ENCODE measurements at regions of chr14 and their contacts with region 1.

Region 1: DNA sequence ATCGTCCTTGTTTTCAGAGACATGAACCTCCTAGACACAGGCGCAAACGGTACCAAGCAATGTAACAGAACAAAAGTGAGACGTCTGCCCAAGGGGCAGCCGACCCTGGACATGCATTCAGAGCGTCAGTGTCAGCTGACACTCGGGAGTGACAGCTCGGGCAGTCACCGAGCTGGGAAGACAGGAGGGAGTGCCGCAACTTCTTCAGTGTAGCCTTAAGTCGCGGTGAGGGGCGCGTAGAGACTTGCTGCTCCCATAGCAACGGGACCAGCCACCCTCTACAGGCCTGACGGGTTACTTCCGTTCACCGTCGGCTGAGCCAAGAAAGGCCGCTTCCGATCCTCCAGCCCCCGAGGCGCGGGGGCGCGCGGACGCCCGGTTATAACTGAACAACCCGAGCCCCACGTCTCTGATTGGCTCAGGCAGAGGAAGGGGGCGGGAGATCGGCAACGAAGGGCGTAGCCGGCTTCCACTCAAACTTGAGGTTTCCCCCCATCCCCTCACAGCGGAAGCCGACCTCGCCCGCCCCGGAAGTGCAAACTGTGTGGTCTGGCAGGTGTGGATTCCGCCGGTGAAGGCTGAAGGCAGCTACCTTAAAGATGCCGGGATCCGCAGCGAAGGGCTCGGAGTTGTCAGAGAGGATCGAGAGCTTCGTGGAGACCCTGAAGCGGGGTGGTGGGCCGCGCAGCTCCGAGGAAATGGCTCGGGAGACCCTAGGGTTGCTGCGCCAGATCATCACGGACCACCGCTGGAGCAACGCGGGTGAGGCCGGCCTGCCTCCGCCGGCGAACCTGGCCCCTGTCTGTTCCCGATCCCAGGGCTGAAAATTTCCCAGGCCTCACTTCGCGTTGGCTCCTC is at the start of gene EIF2B2:
- DNase-seq: peak; percentile 96 to 99 (median 98)
- H3K4me3 ChIP-seq: peak within 1 kb of the TSS; percentile 62 to 84 (median 68)
- H3K27ac ChIP-seq: peak within 1 kb of the TSS; percentile 14 to 93 (median 82)
- H3K4me1 ChIP-seq: peaks cover 8 to 26% of the 10 kb centered on the region in 2 donors
- H3K27me3 ChIP-seq: no peaks in the 10 kb centered on the region
- CTCF ChIP-seq: peak in 3 of 6 experiments; percentile 34 to 46 (median 41)
- POLR2A ChIP-seq: peak; percentile 2 to 61
- total RNA-seq, gene EIF2B2: 20.6 to 90.9 (median 52.0) TPM

Region 2: DNA sequence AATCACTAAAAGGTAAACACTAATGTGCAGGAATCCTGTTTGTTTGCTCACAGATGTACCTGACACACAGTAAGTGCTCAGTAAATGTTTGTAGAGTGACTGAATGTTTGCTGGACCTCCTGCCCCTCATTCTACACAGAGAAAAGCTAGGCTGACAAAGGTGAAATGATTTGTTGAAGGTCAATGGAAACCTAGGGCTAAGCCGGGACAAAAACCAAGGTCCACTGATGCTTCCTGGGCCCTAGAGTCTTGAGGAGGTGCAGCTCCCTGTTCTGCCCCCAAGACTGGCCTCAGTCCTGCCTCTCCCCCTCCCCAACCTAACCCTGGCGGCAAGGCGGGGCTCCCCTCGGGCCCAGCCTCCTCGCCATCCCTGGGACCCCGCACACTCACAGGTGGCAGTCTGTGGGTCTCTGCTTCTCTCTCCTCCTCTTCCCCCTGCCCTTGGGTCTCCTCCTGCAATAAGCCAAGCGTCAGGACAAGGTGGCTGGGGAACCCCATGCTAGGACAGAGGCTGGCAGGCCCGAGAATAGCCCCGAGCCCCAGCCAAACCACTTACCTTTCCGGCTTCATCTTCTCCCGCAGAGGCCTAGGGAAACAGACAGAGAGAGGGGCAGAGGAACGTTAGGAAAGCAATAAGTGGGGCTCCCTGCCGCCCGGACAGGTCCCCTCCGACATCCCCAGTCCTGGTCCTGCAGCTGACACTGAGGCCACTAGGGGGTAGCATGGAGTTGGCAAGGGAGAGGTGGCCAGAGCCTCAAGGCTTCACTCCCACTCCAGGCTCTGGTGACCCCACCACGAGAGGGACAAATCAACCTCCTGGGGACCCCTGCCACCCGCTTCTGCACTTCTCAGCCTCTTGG is 56.6 kb before region 1 on chr14:
- intact Hi-C with region 1: loop called in 1 of 2 experiments (anchors 10 kb)
- DNase-seq: peak; percentile 72 to 88 (median 82)
- H3K4me3 ChIP-seq: no peak overlapping the region
- H3K27ac ChIP-seq: no peak overlapping the region
- H3K4me1 ChIP-seq: peaks cover 3 to 16% of the 10 kb centered on the region in 2 donors
- H3K27me3 ChIP-seq: no peaks in the 10 kb centered on the region
- CTCF ChIP-seq: peak; percentile 72 to 94 (median 90)
- POLR2A ChIP-seq: no peak

Region 3: DNA sequence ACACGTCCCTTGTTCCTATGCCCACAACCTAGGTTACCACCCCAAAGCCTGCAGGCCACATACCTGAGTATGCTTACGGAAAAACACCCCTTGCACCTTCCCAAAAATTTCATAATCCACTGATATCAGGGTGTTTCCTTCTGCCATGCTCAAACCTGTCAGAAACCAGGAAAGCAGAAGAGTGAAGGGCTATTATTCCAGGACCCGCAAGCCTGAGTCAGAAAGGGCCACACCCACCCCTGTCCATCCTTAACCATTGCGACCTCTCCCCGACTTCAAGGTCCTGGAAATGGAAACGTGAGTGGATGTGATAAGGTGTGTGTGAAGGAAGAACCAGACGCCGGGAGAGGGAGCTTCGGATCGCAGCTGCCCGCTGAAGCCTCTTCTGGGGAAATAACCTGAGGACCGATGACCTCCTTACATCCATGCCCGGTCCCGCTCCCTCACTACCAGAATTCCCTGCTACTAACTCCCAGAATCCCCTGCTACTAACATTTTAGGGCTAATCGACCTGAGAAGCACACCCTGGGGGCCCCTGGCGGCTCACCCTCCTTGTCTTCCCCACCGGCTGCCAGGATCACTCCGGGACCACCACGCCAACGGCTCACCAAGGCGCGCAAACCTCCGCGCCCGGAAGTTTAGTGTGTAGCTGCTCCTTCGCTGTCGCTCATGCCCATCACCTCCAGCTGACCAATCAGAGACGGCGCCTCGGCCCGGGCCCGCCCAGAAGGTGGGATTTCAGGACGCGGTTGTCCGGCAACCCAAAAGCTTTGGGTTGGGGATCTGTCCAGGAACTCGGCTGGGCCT is 61.0 kb after region 1 on chr14 and contains the start of gene ACYP1:
- intact Hi-C with region 1: loop called in 1 of 2 experiments (anchors 10 kb)
- DNase-seq: peak; percentile 91 to 97 (median 93)
- H3K4me3 ChIP-seq: peak within 1 kb of the TSS; percentile 53 to 89 (median 66)
- H3K27ac ChIP-seq: peak within 1 kb of the TSS in 3 of 5 donors; percentile 46 to 55 (median 54)
- H3K4me1 ChIP-seq: peaks cover 9 to 27% of the 10 kb centered on the region in 2 donors
- H3K27me3 ChIP-seq: no peaks in the 10 kb centered on the region
- CTCF ChIP-seq: no peak
- POLR2A ChIP-seq: peak in 1 of 2 donors; percentile 30
- total RNA-seq, gene ACYP1: 11.5 to 36.5 (median 17.8) TPM